GM13977 (cell line): ENCODE measurements at regions of chrX and their contacts with region 1.

Region 1: GRCh38 chrX:130975947-130976346 is 72.9 kb upstream of the ENOX2 start:
- DNase-seq: peak; percentile 32
- CTCF ChIP-seq: peak; percentile 70

Region 2: DNA sequence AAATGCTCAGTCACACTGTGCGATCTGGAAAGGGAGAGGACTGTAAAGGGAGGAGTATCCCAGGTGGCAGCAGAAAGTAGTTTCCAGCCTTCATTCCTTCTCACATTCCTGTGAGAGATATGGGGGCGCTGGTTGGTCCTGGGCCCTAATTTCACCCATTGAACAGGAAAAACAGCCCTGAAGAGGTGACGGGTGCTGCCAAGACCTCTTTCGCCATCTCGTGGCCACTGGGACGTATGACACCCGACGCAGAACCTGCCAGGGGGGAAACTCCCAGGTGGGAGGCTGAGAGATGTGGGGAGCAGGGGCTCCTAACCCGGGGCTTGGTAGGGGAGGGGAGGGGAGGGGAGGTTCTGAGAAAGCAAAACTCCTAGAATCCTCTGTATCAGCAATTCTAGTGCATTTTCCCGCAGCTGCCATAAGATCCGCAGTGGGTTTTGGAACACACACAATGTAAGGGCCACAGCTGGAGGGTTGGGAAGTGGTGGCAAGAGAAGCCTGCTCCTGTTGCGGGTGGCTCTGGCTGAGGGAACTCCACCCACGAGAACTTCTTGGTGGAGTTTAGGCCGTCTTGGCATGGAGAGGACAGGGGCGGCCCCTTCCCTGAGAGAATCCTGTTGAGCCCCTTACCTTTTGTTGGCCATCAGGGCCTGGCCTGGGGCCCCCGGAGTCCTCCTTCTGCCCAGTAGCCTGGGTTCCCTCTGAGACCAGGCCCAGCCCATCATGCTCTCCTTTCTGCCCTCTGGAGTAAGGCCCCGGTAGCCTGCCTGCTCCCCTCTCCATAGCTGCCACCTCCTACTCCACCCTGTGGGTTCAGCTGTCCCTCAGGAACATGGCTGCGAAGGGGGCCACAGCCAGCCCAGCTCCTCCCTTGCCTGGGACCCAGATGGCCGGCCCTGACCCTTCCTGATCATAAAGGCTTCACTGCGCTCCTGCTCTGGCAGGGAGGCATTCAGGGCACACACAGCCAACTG is 702.0 kb after region 1 on chrX:
- in situ Hi-C with region 1: loop called (anchors 25 kb)
- DNase-seq: peak; percentile 66
- CTCF ChIP-seq: peak; percentile 85